ENCODE measurements at regions of chr19 and their contacts with region 1.

Region 1: GRCh38 chr19:19488875-19489690 is 26.3 kb downstream of the TSSK6 start:
- DNase-seq: peak; percentile 67
- CTCF ChIP-seq: no peak

Region 2: GRCh38 chr19:19134687-19135158 is 354.4 kb before region 1 on chr19:
- CTCF ChIA-PET with region 1: no interaction called
- POLR2A ChIA-PET with region 1: no interaction called
- DNase-seq: no peak
- CTCF ChIP-seq: no peak

Region 3: GRCh38 chr19:19372656-19373416 is 116.2 kb before region 1 on chr19:
- CTCF ChIA-PET with region 1: interaction called, 220 read pairs
- POLR2A ChIA-PET with region 1: no interaction called
- DNase-seq: peak; percentile 77
- CTCF ChIP-seq: no peak

Region 4: GRCh38 chr19:19404879-19405860 is 83.9 kb before region 1 on chr19 and contains the start of gene GATAD2A:
- CTCF ChIA-PET with region 1: interaction called, 44 read pairs
- POLR2A ChIA-PET with region 1: interaction called, 3 read pairs
- DNase-seq: peak; percentile 96
- CTCF ChIP-seq: peak; percentile 69

Region 5: GRCh38 chr19:19420570-19421298 is 68.3 kb before region 1 on chr19:
- CTCF ChIA-PET with region 1: interaction called, 14 read pairs
- POLR2A ChIA-PET with region 1: no interaction called
- DNase-seq: no peak
- CTCF ChIP-seq: no peak

Region 6: GRCh38 chr19:19459707-19460251 is 29.3 kb before region 1 on chr19:
- CTCF ChIA-PET with region 1: interaction called, 31 read pairs
- POLR2A ChIA-PET with region 1: no interaction called
- DNase-seq: peak; percentile 61
- CTCF ChIP-seq: no peak

Region 7: GRCh38 chr19:19562665-19563347 is 73.7 kb after region 1 on chr19:
- CTCF ChIA-PET with region 1: no interaction called
- POLR2A ChIA-PET with region 1: no interaction called
- DNase-seq: no peak
- CTCF ChIP-seq: peak; percentile 32

Region 8: GRCh38 chr19:19719798-19720197 is 230.7 kb after region 1 on chr19:
- CTCF ChIA-PET with region 1: no interaction called
- POLR2A ChIA-PET with region 1: no interaction called
- DNase-seq: no peak
- CTCF ChIP-seq: no peak

Measured in GM10248 (cell line).